Endothelial cell of umbilical vein (primary cell): ENCODE measurements at regions of chr2 and their contacts with region 1.

Region 1: GRCh38 chr2:75627895-75628504 is 18.6 kb upstream of the MRPL19 start:
- DNase-seq: peak; percentile 78
- H3K4me3 ChIP-seq: no peak overlapping the region
- H3K27ac ChIP-seq: no peak overlapping the region
- H3K4me1 ChIP-seq: no peaks in the 10 kb centered on the region
- H3K27me3 ChIP-seq: peaks cover 10 to 19% of the 10 kb centered on the region in 2 experiments
- CTCF ChIP-seq: peak; percentile 92 to 94
- POLR2A ChIP-seq: no peak

Region 2: DNA sequence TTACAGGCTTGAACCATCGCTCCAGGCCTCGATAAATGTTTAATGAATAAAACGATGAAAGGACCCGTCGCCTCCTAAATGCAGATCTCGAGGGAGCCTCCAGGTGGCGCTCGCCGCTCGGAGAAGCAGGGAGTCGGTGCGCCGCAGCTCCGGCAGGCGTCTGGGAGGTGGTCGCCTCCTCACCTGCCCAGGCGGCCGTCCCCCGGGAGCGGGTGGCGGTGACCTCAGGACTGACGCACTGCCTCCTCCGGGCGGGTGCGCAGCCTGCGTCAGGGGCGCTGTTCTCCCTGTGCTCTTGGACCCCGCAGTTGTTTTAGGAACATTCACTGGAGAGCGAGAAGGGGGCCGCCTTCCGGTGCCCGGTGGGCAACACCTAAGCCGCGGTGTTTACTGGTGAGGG is 708.2 kb before region 1 on chr2:
- CTCF ChIA-PET with region 1: interaction called, 10 read pairs
- POLR2A ChIA-PET with region 1: no interaction called
- dilution Hi-C with region 1: no loop called
- intact Hi-C with region 1: loop called (anchors 10 kb)
- DNase-seq: peak; percentile 47
- H3K4me3 ChIP-seq: peak overlapping the region in 1 of 3 experiments; percentile 33
- H3K27ac ChIP-seq: no peak overlapping the region
- H3K4me1 ChIP-seq: no peaks in the 10 kb centered on the region
- H3K27me3 ChIP-seq: no peaks in the 10 kb centered on the region
- CTCF ChIP-seq: peak; percentile 84 to 93
- POLR2A ChIP-seq: no peak

Region 3: GRCh38 chr2:75199428-75200011 is 428.5 kb before region 1 on chr2 and contains the start of gene TACR1:
- CTCF ChIA-PET with region 1: interaction called, 5 read pairs
- POLR2A ChIA-PET with region 1: no interaction called
- dilution Hi-C with region 1: no loop called
- intact Hi-C with region 1: loop called (anchors 5 kb)
- DNase-seq: peak; percentile 42
- H3K4me3 ChIP-seq: no peak within 1 kb of the TSS
- H3K27ac ChIP-seq: no peak within 1 kb of the TSS
- H3K4me1 ChIP-seq: no peaks in the 10 kb centered on the region
- H3K27me3 ChIP-seq: peaks cover 54 to 62% of the 10 kb centered on the region in 2 experiments
- CTCF ChIP-seq: peak; percentile 50 to 62
- POLR2A ChIP-seq: no peak
- total RNA-seq, gene TACR1: not detected in 2 replicates

Region 4: GRCh38 chr2:75608684-75609333 is 19.2 kb before region 1 on chr2:
- CTCF ChIA-PET with region 1: interaction called, 53 read pairs
- POLR2A ChIA-PET with region 1: no interaction called
- dilution Hi-C with region 1: no loop called
- intact Hi-C with region 1: loop called (anchors 1 kb)
- DNase-seq: peak; percentile 60
- H3K4me3 ChIP-seq: no peak overlapping the region
- H3K27ac ChIP-seq: no peak overlapping the region
- H3K4me1 ChIP-seq: peaks cover 6% of the 10 kb centered on the region
- H3K27me3 ChIP-seq: peaks cover 7 to 14% of the 10 kb centered on the region in 2 experiments
- CTCF ChIP-seq: peak; percentile 97 to 99
- POLR2A ChIP-seq: no peak

Region 5: GRCh38 chr2:75640621-75641121 is 12.7 kb after region 1 on chr2:
- CTCF ChIA-PET with region 1: interaction called, 37 read pairs
- POLR2A ChIA-PET with region 1: no interaction called
- dilution Hi-C with region 1: no loop called
- intact Hi-C with region 1: no loop called
- DNase-seq: peak; percentile 83
- H3K4me3 ChIP-seq: peak overlapping the region in 1 of 3 experiments; percentile 11
- H3K27ac ChIP-seq: peak overlapping the region; percentile 27
- H3K4me1 ChIP-seq: peaks cover 14% of the 10 kb centered on the region
- H3K27me3 ChIP-seq: peaks cover 12 to 17% of the 10 kb centered on the region in 2 experiments
- CTCF ChIP-seq: peak; percentile 99
- POLR2A ChIP-seq: no peak